Endothelial cell of umbilical vein (primary cell): ENCODE measurements at regions of chr17 and their contacts with region 1.

Region 1: GRCh38 chr17:42577532-42578281 is at the start of gene PSMC3IP:
- DNase-seq: peak; percentile 96
- H3K4me3 ChIP-seq: peak within 1 kb of the TSS; percentile 53 to 80 (median 76)
- H3K27ac ChIP-seq: peak within 1 kb of the TSS; percentile 50
- H3K4me1 ChIP-seq: peaks cover 18% of the 10 kb centered on the region
- H3K27me3 ChIP-seq: no peaks in the 10 kb centered on the region
- CTCF ChIP-seq: peak; percentile 55 to 64
- POLR2A ChIP-seq: peak; percentile 69
- total RNA-seq, gene PSMC3IP: 19.3 and 20.8 TPM in 2 replicates

Region 2: DNA sequence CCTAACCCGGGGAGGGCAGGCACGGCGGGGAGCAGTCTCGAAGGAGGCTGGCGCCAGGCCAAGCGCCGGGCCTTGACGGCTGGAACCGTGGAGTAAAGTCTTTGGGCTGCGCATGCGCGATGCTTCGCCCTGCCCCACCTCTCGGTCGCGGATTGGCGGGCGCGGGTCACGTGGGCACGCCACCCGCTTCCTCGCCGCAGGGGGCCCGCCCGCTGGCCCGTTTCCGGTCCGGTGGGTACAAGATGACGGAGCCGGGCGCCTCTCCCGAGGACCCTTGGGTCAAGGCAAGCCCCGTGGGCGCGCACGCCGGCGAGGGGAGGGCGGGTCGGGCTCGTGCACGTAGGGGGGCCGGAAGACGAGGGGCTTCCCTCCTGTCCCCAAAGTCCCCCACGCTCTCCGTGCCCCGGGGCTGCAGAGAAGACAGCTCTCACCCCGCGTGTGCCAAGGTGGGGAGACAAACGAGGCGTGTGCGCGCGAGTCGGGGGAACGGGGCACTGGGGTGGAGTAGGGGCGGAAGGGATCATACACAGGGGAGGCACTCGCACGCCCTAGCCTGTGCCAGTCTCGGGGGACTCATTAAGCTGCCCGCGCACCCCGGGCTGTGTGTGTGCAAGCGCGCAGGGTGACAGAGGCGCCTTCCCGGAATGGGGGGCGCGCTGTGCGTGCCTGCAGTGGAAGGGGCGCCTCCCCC is 10.7 kb before region 1 on chr17 and contains the start of gene MLX:
- CTCF ChIA-PET with region 1: interaction called, 38 read pairs
- POLR2A ChIA-PET with region 1: no interaction called
- dilution Hi-C with region 1: no loop called
- intact Hi-C with region 1: loop called (anchors 1 kb)
- DNase-seq: peak; percentile 92
- H3K4me3 ChIP-seq: peak within 1 kb of the TSS; percentile 29 to 70 (median 61)
- H3K27ac ChIP-seq: peak within 1 kb of the TSS; percentile 0
- H3K4me1 ChIP-seq: peaks cover 27% of the 10 kb centered on the region
- H3K27me3 ChIP-seq: no peaks in the 10 kb centered on the region
- CTCF ChIP-seq: no peak
- POLR2A ChIP-seq: peak; percentile 70
- total RNA-seq, gene MLX: 40.3 and 40.9 TPM in 2 replicates

Region 3: GRCh38 chr17:42667123-42667951 is 89.6 kb after region 1 on chr17:
- CTCF ChIA-PET with region 1: interaction called, 25 read pairs
- POLR2A ChIA-PET with region 1: no interaction called
- dilution Hi-C with region 1: no loop called
- intact Hi-C with region 1: no loop called
- DNase-seq: peak; percentile 49
- H3K4me3 ChIP-seq: no peak overlapping the region
- H3K27ac ChIP-seq: no peak overlapping the region
- H3K4me1 ChIP-seq: peaks cover 7% of the 10 kb centered on the region
- H3K27me3 ChIP-seq: no peaks in the 10 kb centered on the region
- CTCF ChIP-seq: no peak
- POLR2A ChIP-seq: no peak

Region 4: GRCh38 chr17:42709561-42709960 is 131.9 kb after region 1 on chr17:
- CTCF ChIA-PET with region 1: interaction called, 21 read pairs
- POLR2A ChIA-PET with region 1: no interaction called
- dilution Hi-C with region 1: no loop called
- intact Hi-C with region 1: no loop called
- DNase-seq: no peak
- H3K4me3 ChIP-seq: no peak overlapping the region
- H3K27ac ChIP-seq: no peak overlapping the region
- H3K4me1 ChIP-seq: no peaks in the 10 kb centered on the region
- H3K27me3 ChIP-seq: no peaks in the 10 kb centered on the region
- CTCF ChIP-seq: no peak
- POLR2A ChIP-seq: no peak

Region 5: DNA sequence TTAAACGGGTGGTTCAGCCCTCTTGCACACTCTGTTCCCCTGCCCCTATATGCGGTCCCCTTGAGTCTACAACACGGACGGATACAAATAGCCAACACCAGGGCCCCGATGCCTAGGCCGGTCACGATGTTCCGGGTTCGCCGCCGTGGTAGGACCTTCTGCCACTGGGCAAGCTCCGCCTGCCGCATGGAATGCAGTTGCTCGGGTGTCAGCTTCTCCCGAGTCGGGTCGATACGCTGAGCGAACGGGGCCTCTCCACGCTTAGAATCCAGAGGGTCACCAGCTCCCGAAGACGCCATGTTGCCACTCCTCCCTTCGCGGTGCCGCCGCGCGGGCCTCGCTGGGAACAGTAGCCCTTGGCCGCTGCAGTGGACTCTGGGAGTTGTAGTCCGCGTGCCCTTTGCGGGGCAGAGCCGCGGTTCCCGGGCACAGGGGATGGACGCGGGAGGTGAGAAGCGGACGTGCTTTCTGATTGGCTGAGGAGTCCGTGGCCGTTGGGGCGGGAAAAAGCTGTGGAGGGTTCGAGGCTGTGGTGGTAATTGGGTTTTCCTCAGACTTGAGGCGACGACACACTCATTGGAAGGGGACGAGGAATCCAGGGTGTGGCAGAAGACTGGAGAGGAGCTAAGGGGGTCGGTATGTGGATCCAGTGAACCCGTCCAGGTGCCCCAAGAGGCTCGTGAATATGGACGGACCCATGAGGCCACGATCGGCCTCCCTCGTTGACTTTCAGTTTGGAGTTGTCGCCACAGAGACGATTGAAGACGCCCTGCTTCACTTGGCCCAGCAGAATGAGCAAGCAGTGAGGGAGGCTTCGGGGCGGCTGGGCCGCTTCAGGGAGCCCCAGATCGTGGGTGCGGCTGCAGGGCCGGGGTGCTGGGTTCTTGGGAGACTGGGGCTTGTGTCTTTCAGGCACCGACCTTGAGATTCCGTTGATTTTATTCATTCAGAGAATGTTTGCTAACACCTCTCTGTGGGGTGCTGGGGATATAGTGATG is 221.0 kb after region 1 on chr17 and contains the starts of genes CNTD1 and COA3:
- CTCF ChIA-PET with region 1: interaction called, 5 read pairs
- POLR2A ChIA-PET with region 1: interaction called, 10 read pairs
- dilution Hi-C with region 1: no loop called
- intact Hi-C with region 1: no loop called
- DNase-seq: peak; percentile 89
- H3K4me3 ChIP-seq: peak within 1 kb of the TSS; percentile 16 to 76 (median 71)
- H3K27ac ChIP-seq: no peak within 1 kb of the TSS
- H3K4me1 ChIP-seq: peaks cover 11% of the 10 kb centered on the region
- H3K27me3 ChIP-seq: no peaks in the 10 kb centered on the region
- CTCF ChIP-seq: no peak
- POLR2A ChIP-seq: peak; percentile 84
- total RNA-seq, gene CNTD1: not detected in 2 replicates
- total RNA-seq, gene COA3: 56.6 and 57.5 TPM in 2 replicates